PC-9 (cell line): ENCODE measurements at regions of chr6 and their contacts with region 1.

Region 1: GRCh38 chr6:123316733-123317323 is 319.9 kb downstream of the TRDN start:
- DNase-seq: no peak
- H3K4me3 ChIP-seq: no peak overlapping the region
- H3K27ac ChIP-seq: no peak overlapping the region
- H3K4me1 ChIP-seq: no peaks in the 10 kb centered on the region
- H3K27me3 ChIP-seq: no peaks in the 10 kb centered on the region
- CTCF ChIP-seq: peak; percentile 89

Region 2: GRCh38 chr6:122187186-122187585 is 1129.6 kb before region 1 on chr6:
- CTCF ChIA-PET with region 1: no interaction called
- POLR2A ChIA-PET with region 1: no interaction called
- intact Hi-C with region 1: no loop called
- DNase-seq: no peak
- H3K4me3 ChIP-seq: no peak overlapping the region
- H3K27ac ChIP-seq: no peak overlapping the region
- H3K4me1 ChIP-seq: no peaks in the 10 kb centered on the region
- H3K27me3 ChIP-seq: no peaks in the 10 kb centered on the region
- CTCF ChIP-seq: no peak

Region 3: GRCh38 chr6:122947355-122947754 is 369.5 kb before region 1 on chr6:
- CTCF ChIA-PET with region 1: interaction called, 6 read pairs
- POLR2A ChIA-PET with region 1: no interaction called
- intact Hi-C with region 1: loop called (anchors 1 kb)
- DNase-seq: peak in 1 of 2 experiments; percentile 3
- H3K4me3 ChIP-seq: no peak overlapping the region
- H3K27ac ChIP-seq: no peak overlapping the region
- H3K4me1 ChIP-seq: no peaks in the 10 kb centered on the region
- H3K27me3 ChIP-seq: no peaks in the 10 kb centered on the region
- CTCF ChIP-seq: peak; percentile 83

Region 4: GRCh38 chr6:123288649-123289048 is 28.2 kb before region 1 on chr6:
- CTCF ChIA-PET with region 1: no interaction called
- POLR2A ChIA-PET with region 1: no interaction called
- intact Hi-C with region 1: no loop called
- DNase-seq: no peak
- H3K4me3 ChIP-seq: no peak overlapping the region
- H3K27ac ChIP-seq: no peak overlapping the region
- H3K4me1 ChIP-seq: no peaks in the 10 kb centered on the region
- H3K27me3 ChIP-seq: no peaks in the 10 kb centered on the region
- CTCF ChIP-seq: no peak